ENCODE measurements at regions of chr19 and their contacts with region 1.

Region 1: DNA sequence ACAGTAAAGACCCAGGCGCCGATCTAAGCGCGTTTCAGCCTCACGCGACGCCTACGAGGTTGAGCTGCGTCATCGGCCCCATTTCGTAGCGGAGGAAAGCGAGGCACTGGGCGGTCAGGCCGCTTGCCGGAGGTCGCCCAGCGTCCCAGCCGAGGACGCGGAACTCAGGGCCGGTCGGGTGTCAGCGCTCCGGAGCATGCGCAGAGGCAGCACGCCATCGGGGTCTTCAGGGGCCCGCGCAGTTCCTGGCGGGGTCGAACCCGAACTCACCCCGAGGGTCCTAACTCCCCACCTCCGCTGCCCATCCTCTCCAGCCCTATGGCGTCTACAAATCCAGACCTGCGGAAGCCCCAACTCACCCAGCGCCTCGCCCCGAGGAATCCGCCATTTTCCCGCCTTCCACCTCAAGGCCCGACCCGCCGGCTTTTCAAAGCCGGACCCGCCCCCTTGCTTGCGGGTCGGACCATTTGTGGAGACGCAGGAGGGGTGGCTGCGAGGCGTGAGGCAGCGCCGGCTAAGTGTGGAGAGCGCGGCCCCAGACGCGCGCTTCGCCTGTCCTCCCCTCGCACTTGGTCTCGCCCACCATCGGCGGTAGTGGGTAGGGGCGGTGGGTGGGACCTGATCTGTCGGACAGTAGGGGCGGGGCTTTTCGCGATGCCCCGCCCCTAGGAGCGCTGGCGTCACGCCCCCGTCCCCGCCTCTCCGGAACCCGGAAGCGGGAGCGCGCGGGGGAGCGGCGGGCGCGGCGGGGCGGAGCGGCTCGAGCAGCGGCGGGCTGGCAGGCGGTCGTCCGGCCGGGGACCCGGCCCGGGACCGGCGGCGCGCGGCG is at the starts of genes HAUS8 and MYO9B:
- DNase-seq: peak; percentile 99 to 100
- ATAC-seq: peak; percentile 89 to 98 (median 89)
- H3K4me3 ChIP-seq: peak within 1 kb of the TSS; percentile 83
- H3K4me3 Mint-ChIP-seq: peak within 1 kb of the TSS; percentile 98
- H3K27ac ChIP-seq: peak within 1 kb of the TSS; percentile 81
- H3K27ac Mint-ChIP-seq: peak within 1 kb of the TSS; percentile 92 to 96
- H3K4me1 ChIP-seq: peaks cover 57% of the 10 kb centered on the region
- H3K4me1 Mint-ChIP-seq: peaks cover 48 to 73% of the 10 kb centered on the region in 2 donors
- H3K27me3 ChIP-seq: no peaks in the 10 kb centered on the region
- H3K27me3 Mint-ChIP-seq: peaks cover 0 to 3% of the 10 kb centered on the region in 2 donors
- CTCF ChIP-seq: no peak
- total RNA-seq, gene HAUS8: 10.3 to 13.5 (median 10.4) TPM
- total RNA-seq, gene MYO9B: 321 to 378 (median 365) TPM

Region 2: DNA sequence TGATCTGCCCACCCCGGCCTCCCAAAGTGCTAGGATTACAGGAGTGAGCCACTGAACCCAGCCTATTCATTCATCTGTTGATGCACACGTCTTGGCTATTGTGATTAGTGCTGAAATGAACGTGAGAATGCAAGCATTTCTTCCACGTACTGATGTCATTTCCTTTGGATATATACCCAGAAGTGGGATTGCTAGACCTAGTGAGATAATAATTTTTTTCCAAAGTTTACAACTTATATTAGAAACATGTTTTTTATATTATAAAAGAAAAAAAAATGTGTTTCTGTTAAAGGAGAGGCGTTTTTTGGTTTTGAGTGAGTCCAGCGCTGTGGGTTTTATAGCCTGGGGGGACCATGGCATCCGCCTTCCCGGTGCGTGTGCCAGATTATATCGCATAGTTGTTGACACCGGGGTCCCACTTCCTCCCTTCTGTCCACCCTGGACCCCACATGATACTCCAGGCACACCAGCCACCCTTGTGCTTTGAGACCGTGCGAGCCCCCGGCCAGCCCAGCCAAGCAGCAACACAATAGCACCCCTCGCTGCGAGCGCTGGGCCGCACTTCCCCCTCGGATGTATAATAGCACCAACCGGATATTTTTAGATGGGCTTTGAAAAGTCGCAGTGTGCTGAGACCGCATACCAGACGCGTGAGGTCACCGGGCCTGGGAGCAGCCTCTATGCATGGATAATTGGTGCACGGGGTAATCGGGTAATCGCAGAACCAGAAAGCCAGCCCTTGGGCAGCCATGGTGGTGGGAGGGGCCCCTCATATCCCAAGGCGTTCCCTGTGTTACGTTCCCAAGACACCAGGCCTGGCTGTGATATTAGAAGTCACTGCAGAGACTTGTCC is 60.0 kb after region 1 on chr19:
- intact Hi-C with region 1: loop called (anchors 2 kb)
- DNase-seq: peak; percentile 56 to 61
- ATAC-seq: peak; percentile 84 to 93 (median 92)
- H3K4me3 ChIP-seq: no peak overlapping the region
- H3K4me3 Mint-ChIP-seq: peak overlapping the region; percentile 75
- H3K27ac ChIP-seq: peak overlapping the region; percentile 58
- H3K27ac Mint-ChIP-seq: peak overlapping the region; percentile 81 to 92
- H3K4me1 ChIP-seq: peaks cover 25% of the 10 kb centered on the region
- H3K4me1 Mint-ChIP-seq: peaks cover 25 to 37% of the 10 kb centered on the region in 2 donors
- H3K27me3 ChIP-seq: no peaks in the 10 kb centered on the region
- H3K27me3 Mint-ChIP-seq: no peaks in the 10 kb centered on the region
- CTCF ChIP-seq: no peak